ENCODE measurements at regions of chr15 and their contacts with region 1.

Region 1: GRCh38 chr15:22811640-22812039 is 25.2 kb downstream of the NIPA1 start:
- DNase-seq: peak; percentile 19 to 91 (median 74)
- H3K4me3 ChIP-seq: peak overlapping the region in 4 of 59 donors; percentile 3 to 16 (median 10)
- H3K27ac ChIP-seq: peak overlapping the region in 55 of 59 donors; percentile 4 to 86 (median 70)
- H3K27me3 ChIP-seq: no peaks in the 10 kb centered on the region
- CTCF ChIP-seq: peak in 54 of 56 donors; percentile 34 to 79 (median 56)

Region 2: DNA sequence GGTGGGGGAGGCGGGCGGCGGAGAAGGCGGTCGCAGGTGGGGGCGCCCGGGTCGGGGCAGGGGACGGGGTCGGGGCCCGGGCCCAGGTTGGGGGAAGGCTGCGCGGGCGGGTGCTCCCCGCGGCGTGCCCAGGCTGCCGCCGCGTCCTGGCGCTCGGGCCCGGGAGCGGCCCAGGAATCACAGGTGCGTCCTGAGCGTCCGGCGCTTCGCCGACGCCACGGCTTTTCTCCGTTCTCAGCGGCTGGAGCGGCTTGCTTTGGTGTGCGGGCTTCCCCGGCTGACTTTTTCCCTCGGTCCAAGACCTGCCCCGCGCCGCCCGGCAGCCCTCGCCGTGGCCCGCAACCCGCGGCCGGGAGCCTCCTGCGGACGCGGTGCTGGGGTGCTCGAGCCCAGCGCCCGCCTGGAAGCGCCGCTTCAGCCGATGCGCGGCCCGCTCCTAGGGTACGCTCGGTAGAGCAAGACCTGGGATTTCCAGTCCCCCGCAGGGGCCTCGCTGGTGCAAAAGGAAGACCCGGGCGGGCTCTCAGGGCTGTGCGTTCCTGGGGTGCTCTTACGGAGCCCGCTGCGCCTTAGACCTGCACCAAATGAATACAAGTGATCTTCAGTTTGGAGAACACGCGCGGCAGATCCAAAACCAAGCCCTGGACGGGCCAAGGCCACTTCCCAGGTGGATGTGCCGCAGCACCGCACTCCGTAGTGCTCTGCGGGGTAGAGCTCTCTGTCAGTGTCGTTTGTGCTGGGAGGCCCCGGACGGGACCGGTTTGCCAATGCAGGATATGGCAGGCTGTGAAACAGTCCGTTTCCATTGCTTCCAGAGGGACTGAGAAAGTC is 24.6 kb before region 1 on chr15:
- intact Hi-C with region 1: loop called in 1 of 2 experiments (anchors 2 kb)
- DNase-seq: peak in 4 of 10 donors; percentile 24 to 63 (median 44)
- H3K4me3 ChIP-seq: peak overlapping the region; percentile 59 to 97 (median 84)
- H3K27ac ChIP-seq: peak overlapping the region; percentile 33 to 99 (median 90)
- H3K27me3 ChIP-seq: no peaks in the 10 kb centered on the region
- CTCF ChIP-seq: no peak

Region 3: GRCh38 chr15:22827125-22827524 is 15.5 kb after region 1 on chr15:
- intact Hi-C with region 1: no loop called
- DNase-seq: no peak
- H3K4me3 ChIP-seq: no peak overlapping the region
- H3K27ac ChIP-seq: no peak overlapping the region
- H3K27me3 ChIP-seq: no peaks in the 10 kb centered on the region
- CTCF ChIP-seq: no peak

Measured in dorsolateral prefrontal cortex (tissue), 120 donors.